CD8-positive, alpha-beta T cell (primary cell): ENCODE measurements at regions of chr14 and their contacts with region 1.

Region 1: GRCh38 chr14:71138448-71139293 is 231.4 kb downstream of the PCNX1 start:
- DNase-seq: peak; percentile 36 to 75 (median 64)
- ATAC-seq: peak; percentile 23
- H3K4me3 ChIP-seq: no peak overlapping the region
- H3K4me3 Mint-ChIP-seq: no peak overlapping the region
- H3K27ac ChIP-seq: no peak overlapping the region
- H3K27ac Mint-ChIP-seq: no peak overlapping the region
- H3K4me1 ChIP-seq: peaks cover 18% of the 10 kb centered on the region
- H3K4me1 Mint-ChIP-seq: peaks cover 25% of the 10 kb centered on the region
- H3K27me3 ChIP-seq: no peaks in the 10 kb centered on the region
- H3K27me3 Mint-ChIP-seq: no peaks in the 10 kb centered on the region
- CTCF ChIP-seq: peak; percentile 93

Region 2: GRCh38 chr14:71403656-71404055 is 265.0 kb after region 1 on chr14:
- CTCF ChIA-PET with region 1: interaction called, 4 read pairs
- POLR2A ChIA-PET with region 1: no interaction called
- intact Hi-C with region 1: loop called (anchors 2 to 10 kb)
- DNase-seq: peak in 4 of 9 experiments; percentile 17 to 63 (median 46)
- ATAC-seq: peak; percentile 50
- H3K4me3 ChIP-seq: no peak overlapping the region
- H3K4me3 Mint-ChIP-seq: no peak overlapping the region
- H3K27ac ChIP-seq: no peak overlapping the region
- H3K27ac Mint-ChIP-seq: peak overlapping the region; percentile 21
- H3K4me1 ChIP-seq: peaks cover 15% of the 10 kb centered on the region
- H3K4me1 Mint-ChIP-seq: peaks cover 32% of the 10 kb centered on the region
- H3K27me3 ChIP-seq: no peaks in the 10 kb centered on the region
- H3K27me3 Mint-ChIP-seq: no peaks in the 10 kb centered on the region
- CTCF ChIP-seq: no peak

Region 3: DNA sequence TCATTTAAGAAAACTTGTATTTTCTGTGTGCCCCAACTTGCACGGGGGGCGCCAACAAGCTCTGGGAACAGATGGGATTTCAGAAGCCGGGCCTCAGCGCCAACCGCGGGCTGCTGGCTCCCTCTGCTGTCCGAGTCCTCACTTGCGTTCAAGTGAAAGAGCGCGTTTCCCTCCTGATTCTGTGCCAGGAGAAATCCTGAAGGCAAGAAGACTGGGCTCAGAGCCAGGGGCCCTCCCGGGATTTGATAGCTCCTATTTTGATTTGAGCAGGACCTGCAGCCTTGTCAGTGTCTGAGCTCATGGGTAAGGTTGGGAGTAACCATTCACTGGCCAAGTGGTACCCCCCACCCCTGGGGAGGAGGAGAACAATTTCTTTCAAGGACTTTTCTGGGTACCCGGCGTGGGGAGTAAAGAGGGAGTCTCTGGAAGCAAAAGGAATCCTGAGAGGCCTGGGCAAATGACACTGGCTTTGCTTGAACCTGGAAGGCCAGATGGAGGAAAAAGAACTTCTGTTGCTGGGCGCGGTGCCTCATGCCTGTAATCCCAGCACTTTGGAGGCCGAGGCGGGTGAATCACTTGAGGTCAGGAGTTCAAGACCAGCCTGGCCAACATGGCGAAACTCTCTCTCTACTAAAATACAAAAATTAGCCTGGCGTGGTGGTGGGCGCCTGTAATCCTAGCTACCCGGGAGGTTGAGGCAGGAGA is 614.6 kb after region 1 on chr14:
- CTCF ChIA-PET with region 1: interaction called, 269 read pairs
- POLR2A ChIA-PET with region 1: no interaction called
- intact Hi-C with region 1: loop called (anchors 1 kb)
- DNase-seq: peak; percentile 48 to 81 (median 73)
- ATAC-seq: peak; percentile 58
- H3K4me3 ChIP-seq: no peak overlapping the region
- H3K4me3 Mint-ChIP-seq: no peak overlapping the region
- H3K27ac ChIP-seq: no peak overlapping the region
- H3K27ac Mint-ChIP-seq: no peak overlapping the region
- H3K4me1 ChIP-seq: peaks cover 4% of the 10 kb centered on the region
- H3K4me1 Mint-ChIP-seq: no peaks in the 10 kb centered on the region
- H3K27me3 ChIP-seq: no peaks in the 10 kb centered on the region
- H3K27me3 Mint-ChIP-seq: no peaks in the 10 kb centered on the region
- CTCF ChIP-seq: peak; percentile 90

Region 4: DNA sequence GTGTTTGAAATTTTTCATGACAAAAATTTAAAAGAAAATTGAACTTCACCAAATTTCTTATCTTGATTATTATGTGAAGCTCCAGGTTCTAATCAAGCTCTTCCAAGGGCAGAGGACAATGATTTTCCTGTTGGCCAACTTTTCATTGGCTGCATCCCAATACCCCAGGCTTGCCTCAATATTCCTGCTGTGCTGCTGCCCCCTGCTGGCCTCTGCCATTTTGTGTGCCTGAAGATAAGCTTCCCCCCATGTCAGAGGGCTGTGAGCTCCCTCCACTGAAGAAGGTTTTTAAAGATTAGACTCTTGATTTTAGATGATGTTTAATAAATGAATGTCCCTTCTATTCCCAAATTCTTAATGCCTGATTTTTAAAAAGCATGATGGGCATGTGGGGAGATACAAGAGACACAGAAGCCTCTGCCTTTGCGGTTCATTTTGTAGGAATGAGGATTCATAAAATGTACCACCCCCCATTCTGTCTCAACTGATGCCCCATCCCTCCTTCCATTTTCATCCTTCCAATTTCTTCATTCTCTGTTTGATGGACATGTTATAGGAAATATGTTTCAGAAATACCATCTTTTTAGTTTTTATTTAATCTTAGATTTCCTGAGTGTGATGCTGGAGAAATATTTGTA is 716.8 kb after region 1 on chr14:
- CTCF ChIA-PET with region 1: interaction called, 6 read pairs
- POLR2A ChIA-PET with region 1: no interaction called
- intact Hi-C with region 1: loop called in 1 of 2 experiments (anchors 5 kb)
- DNase-seq: peak in 8 of 9 experiments; percentile 19 to 58 (median 40)
- ATAC-seq: no peak
- H3K4me3 ChIP-seq: no peak overlapping the region
- H3K4me3 Mint-ChIP-seq: no peak overlapping the region
- H3K27ac ChIP-seq: no peak overlapping the region
- H3K27ac Mint-ChIP-seq: no peak overlapping the region
- H3K4me1 ChIP-seq: no peaks in the 10 kb centered on the region
- H3K4me1 Mint-ChIP-seq: no peaks in the 10 kb centered on the region
- H3K27me3 ChIP-seq: peaks cover 2 to 7% of the 10 kb centered on the region in 2 experiments
- H3K27me3 Mint-ChIP-seq: peaks cover 41% of the 10 kb centered on the region
- CTCF ChIP-seq: peak; percentile 41

Region 5: GRCh38 chr14:72420725-72421474 is 1282.2 kb after region 1 on chr14:
- CTCF ChIA-PET with region 1: no interaction called
- POLR2A ChIA-PET with region 1: no interaction called
- intact Hi-C with region 1: loop called in 1 of 2 experiments (anchors 2 kb)
- DNase-seq: peak; percentile 34 to 69 (median 54)
- ATAC-seq: no peak
- H3K4me3 ChIP-seq: no peak overlapping the region
- H3K4me3 Mint-ChIP-seq: no peak overlapping the region
- H3K27ac ChIP-seq: no peak overlapping the region
- H3K27ac Mint-ChIP-seq: no peak overlapping the region
- H3K4me1 ChIP-seq: no peaks in the 10 kb centered on the region
- H3K4me1 Mint-ChIP-seq: peaks cover 3% of the 10 kb centered on the region
- H3K27me3 ChIP-seq: peaks cover 0 to 3% of the 10 kb centered on the region in 2 experiments
- H3K27me3 Mint-ChIP-seq: peaks cover 21% of the 10 kb centered on the region
- CTCF ChIP-seq: peak; percentile 74

Region 6: DNA sequence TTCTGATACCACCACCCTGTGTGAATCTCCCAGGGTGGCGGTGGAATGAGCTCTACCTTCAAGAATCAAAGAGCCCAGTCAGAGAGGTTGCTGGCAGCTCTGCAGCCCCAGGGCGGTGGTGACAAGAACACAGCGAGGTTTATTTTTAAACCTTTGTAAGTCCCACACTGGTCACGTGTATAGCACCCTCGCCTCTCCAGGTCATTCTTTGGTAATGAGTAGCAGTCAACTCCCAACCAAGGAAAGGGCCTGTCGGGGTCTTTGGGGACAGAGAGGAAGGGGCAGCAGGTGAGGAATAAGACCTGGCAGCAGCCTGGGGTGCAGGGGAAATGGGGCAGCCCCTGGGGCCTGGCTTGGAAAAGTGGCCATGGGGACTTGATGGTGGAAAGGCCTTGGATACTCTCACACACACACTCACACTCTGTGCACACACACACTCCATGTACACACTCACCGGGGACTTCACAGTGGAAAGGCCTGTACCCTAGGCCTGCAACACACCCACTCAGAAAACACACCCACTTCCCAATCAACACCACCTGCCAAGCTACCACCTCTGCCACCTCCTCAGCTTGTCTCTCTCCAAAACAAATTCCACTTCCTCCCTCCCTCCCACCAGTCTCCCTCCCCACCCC is 1576.7 kb after region 1 on chr14:
- CTCF ChIA-PET with region 1: no interaction called
- POLR2A ChIA-PET with region 1: no interaction called
- intact Hi-C with region 1: no loop called
- DNase-seq: peak in 1 of 9 experiments; percentile 25
- ATAC-seq: no peak
- H3K4me3 ChIP-seq: no peak overlapping the region
- H3K4me3 Mint-ChIP-seq: no peak overlapping the region
- H3K27ac ChIP-seq: no peak overlapping the region
- H3K27ac Mint-ChIP-seq: peak overlapping the region; percentile 23
- H3K4me1 ChIP-seq: peaks cover 42% of the 10 kb centered on the region
- H3K4me1 Mint-ChIP-seq: peaks cover 43% of the 10 kb centered on the region
- H3K27me3 ChIP-seq: no peaks in the 10 kb centered on the region
- H3K27me3 Mint-ChIP-seq: no peaks in the 10 kb centered on the region
- CTCF ChIP-seq: no peak